Esophagus muscularis mucosa (tissue), 4 donors: ENCODE measurements at regions of chr2 and their contacts with region 1.

Region 1: DNA sequence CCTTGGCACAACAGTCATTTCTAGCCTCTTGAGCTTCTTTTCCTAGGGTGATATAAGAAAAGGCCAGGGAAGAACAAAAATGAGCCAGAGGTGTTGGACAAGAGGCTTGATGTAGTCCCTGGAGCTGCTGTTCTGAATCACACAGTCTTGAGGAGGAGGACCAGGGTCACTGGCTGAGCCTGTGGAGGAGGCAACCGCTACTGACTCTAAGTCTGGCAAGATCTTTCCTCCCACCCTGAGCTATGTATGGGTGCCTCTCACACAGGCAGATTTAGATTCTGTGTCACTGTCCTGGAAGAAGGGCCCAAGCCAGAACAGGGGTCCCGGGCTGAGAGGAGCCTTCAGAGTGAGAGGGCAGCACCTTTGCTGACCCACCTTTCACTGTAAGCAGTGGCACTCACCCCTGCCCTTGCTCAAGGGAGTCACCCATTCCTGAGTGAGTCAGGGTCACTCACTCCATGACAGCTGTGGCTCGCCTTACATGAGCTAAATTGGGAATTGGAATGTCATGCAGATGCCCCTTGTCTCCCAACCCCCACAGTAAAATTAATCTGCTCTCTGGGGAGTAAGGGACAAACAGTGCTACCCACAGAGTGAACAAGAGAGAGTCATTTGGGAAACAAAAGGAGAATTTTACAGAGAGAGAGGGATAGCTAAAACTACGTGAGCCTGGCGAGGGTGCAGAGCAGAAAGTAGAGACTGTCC is at the start of gene TRIM54:
- DNase-seq: no peak
- H3K4me3 ChIP-seq: no peak within 1 kb of the TSS
- H3K27ac ChIP-seq: no peak within 1 kb of the TSS
- H3K4me1 ChIP-seq: peaks cover 0 to 17% (median 4%) of the 10 kb centered on the region in 4 donors
- H3K27me3 ChIP-seq: peaks cover 0 to 35% (median 3%) of the 10 kb centered on the region in 4 donors
- CTCF ChIP-seq: no peak
- EP300 ChIP-seq: no peak
- POLR2A ChIP-seq: no peak
- total RNA-seq, gene TRIM54: 0.32 TPM in 1 of 4 donors, not detected in the others

Region 2: DNA sequence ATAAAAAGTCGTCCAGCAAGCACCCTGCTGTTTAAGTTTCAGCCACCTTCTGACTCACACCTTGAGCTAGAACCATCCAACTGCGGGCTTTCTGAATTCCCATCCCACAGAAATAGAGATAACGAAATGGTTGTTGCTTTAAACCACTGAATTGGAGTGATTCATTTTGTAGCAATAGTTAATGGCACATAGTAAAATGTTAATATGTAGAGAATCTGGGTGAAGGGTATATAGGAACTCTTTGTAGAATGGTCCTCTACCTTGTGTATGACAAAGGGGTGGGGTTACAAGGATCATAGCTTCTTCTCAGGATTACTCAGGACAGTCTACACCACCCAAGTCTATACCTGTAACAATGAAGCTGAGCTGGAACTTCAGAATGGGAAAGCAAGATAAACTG is 314.0 kb before region 1 on chr2:
- intact Hi-C with region 1: loop called (anchors 10 kb)
- DNase-seq: no peak
- H3K4me3 ChIP-seq: no peak overlapping the region
- H3K27ac ChIP-seq: no peak overlapping the region
- H3K4me1 ChIP-seq: peaks cover 15 to 32% (median 27%) of the 10 kb centered on the region in 4 donors
- H3K27me3 ChIP-seq: no peaks in the 10 kb centered on the region
- CTCF ChIP-seq: no peak
- EP300 ChIP-seq: no peak
- POLR2A ChIP-seq: no peak

Region 3: DNA sequence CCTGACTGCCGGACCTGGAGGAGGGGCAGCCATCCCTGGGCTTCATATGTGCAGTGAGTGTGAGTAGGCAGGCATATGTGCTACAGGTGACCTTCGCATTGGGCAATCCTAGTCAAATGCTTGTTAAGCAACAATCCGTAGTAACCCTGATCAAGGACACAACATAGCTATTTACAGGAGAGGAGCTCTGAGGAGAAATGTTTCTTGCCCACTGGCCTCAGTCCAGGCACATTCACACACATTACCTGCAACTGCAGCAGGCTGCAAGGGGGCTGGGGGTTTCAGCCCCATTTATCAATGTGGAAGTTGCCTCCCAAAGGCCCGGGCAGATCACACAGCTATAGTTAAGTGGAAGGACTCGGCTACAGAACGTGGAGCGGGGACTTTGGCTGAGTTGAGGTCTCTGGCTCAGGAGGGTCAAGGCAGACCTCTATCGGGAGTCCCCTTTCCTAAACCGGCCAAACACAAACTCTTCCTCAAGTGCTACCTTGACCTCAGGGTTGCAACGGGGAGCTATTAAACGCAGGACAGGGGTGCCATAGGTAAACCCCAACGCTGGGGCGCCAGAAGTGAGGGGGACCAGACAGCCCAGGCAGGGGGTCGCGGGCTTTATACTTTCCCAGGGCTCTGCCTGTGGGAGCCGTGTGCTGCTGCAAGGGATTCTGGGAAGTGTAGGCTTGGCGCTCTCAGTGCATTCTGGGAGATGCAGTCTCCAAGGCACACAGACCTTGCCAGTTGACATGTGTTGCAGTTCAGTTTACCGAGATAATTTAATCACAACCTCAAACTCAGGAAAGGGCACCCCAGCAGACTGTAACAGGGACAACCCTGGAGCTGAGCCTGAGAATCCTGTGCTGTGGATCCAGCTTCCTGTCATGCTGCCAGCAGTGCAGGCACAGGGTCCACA is 186.0 kb before region 1 on chr2:
- intact Hi-C with region 1: loop called (anchors 2 kb)
- DNase-seq: no peak
- H3K4me3 ChIP-seq: peak overlapping the region; percentile 42 to 57 (median 46)
- H3K27ac ChIP-seq: no peak overlapping the region
- H3K4me1 ChIP-seq: peaks cover 11 to 13% (median 12%) of the 10 kb centered on the region in 4 donors
- H3K27me3 ChIP-seq: no peaks in the 10 kb centered on the region
- CTCF ChIP-seq: no peak
- EP300 ChIP-seq: no peak
- POLR2A ChIP-seq: no peak